CD4-positive, alpha-beta memory T cell (primary cell): ENCODE measurements at regions of chr2 and their contacts with region 1.

Region 1: GRCh38 chr2:70785137-70785911 is 5.1 kb downstream of the FIGLA start:
- DNase-seq: peak in 2 of 5 donors; percentile 11 to 17
- H3K4me3 ChIP-seq: no peak overlapping the region
- H3K4me3 Mint-ChIP-seq: no peak overlapping the region
- H3K27ac ChIP-seq: no peak overlapping the region
- H3K27ac Mint-ChIP-seq: no peak overlapping the region
- H3K4me1 ChIP-seq: peaks cover 7% of the 10 kb centered on the region
- H3K4me1 Mint-ChIP-seq: peaks cover 6 to 13% (median 8%) of the 10 kb centered on the region in 4 donors
- H3K27me3 ChIP-seq: peaks cover 26% of the 10 kb centered on the region
- H3K27me3 Mint-ChIP-seq: peaks cover 26 to 37% of the 10 kb centered on the region in 2 donors

Region 2: DNA sequence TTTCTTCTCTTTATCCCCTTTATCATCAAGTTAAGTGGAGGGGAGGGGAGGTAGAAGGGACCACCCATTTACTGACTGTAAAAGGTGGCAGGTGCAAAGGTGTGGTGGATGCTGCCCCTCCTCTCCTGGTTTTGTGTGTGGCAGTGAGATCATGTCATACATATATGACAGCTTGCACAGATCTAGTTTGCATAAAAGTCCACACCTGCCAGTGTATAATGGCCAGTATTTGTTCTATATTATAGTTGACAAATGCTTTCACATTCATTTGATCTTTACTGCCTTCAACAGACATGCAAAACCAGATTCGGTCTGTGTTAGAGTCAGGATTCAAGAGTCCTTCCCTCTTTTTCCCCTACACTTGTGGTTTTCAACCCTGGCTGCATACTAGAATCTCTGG is 286.8 kb before region 1 on chr2:
- CTCF ChIA-PET with region 1: no interaction called
- POLR2A ChIA-PET with region 1: no interaction called
- intact Hi-C with region 1: no loop called
- DNase-seq: no peak
- H3K4me3 ChIP-seq: no peak overlapping the region
- H3K4me3 Mint-ChIP-seq: no peak overlapping the region
- H3K27ac ChIP-seq: no peak overlapping the region
- H3K27ac Mint-ChIP-seq: no peak overlapping the region
- H3K4me1 ChIP-seq: no peaks in the 10 kb centered on the region
- H3K4me1 Mint-ChIP-seq: peaks cover 0 to 3% (median 0%) of the 10 kb centered on the region in 4 donors
- H3K27me3 ChIP-seq: no peaks in the 10 kb centered on the region
- H3K27me3 Mint-ChIP-seq: peaks cover 10% of the 10 kb centered on the region in 2 donors

Region 3: GRCh38 chr2:70772486-70773155 is 12.7 kb before region 1 on chr2:
- CTCF ChIA-PET with region 1: interaction called, 10 read pairs
- POLR2A ChIA-PET with region 1: no interaction called
- intact Hi-C with region 1: no loop called
- DNase-seq: no peak
- H3K4me3 ChIP-seq: no peak overlapping the region
- H3K4me3 Mint-ChIP-seq: no peak overlapping the region
- H3K27ac ChIP-seq: no peak overlapping the region
- H3K27ac Mint-ChIP-seq: no peak overlapping the region
- H3K4me1 ChIP-seq: peaks cover 3% of the 10 kb centered on the region
- H3K4me1 Mint-ChIP-seq: peaks cover 3 to 9% (median 6%) of the 10 kb centered on the region in 4 donors
- H3K27me3 ChIP-seq: peaks cover 23% of the 10 kb centered on the region
- H3K27me3 Mint-ChIP-seq: peaks cover 38 to 56% of the 10 kb centered on the region in 2 donors